Pancreas (tissue), 10 donors: ENCODE measurements at regions of chr7 and their contacts with region 1.

Region 1: DNA sequence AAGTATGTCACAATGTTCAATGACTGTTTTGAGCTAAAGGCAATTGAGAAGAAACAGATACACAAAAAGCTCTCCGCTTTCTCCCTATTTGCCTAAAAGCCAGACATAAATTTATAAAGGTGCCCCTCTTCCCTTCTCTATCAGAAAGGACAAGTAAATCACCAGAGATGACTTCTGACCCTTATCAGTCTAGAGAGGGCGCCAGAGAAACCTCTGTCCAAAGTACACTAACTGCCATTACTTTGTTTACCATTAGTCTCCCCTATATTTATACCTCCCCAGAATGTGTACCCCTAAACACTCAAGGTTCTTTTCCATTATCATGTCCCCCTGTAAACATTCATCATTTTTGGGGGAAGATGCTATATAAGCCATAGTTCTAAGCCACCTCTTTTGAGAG is 49.3 kb downstream of the TPK1 start:
- DNase-seq: no peak
- ATAC-seq: no peak
- H3K4me3 ChIP-seq: no peak overlapping the region
- H3K27ac ChIP-seq: no peak overlapping the region
- H3K4me1 ChIP-seq: no peaks in the 10 kb centered on the region
- H3K27me3 ChIP-seq: no peaks in the 10 kb centered on the region
- CTCF ChIP-seq: no peak

Region 2: GRCh38 chr7:144656965-144657517 is 129.5 kb before region 1 on chr7:
- intact Hi-C with region 1: no loop called
- DNase-seq: no peak
- ATAC-seq: peak in 1 of 4 donors; percentile 44
- H3K4me3 ChIP-seq: no peak overlapping the region
- H3K27ac ChIP-seq: no peak overlapping the region
- H3K4me1 ChIP-seq: no peaks in the 10 kb centered on the region
- H3K27me3 ChIP-seq: no peaks in the 10 kb centered on the region
- CTCF ChIP-seq: no peak

Region 3: GRCh38 chr7:144885478-144885877 is 99.0 kb after region 1 on chr7:
- intact Hi-C with region 1: no loop called
- DNase-seq: no peak
- ATAC-seq: no peak
- H3K4me3 ChIP-seq: no peak overlapping the region
- H3K27ac ChIP-seq: no peak overlapping the region
- H3K4me1 ChIP-seq: no peaks in the 10 kb centered on the region
- H3K27me3 ChIP-seq: no peaks in the 10 kb centered on the region
- CTCF ChIP-seq: no peak

Region 4: DNA sequence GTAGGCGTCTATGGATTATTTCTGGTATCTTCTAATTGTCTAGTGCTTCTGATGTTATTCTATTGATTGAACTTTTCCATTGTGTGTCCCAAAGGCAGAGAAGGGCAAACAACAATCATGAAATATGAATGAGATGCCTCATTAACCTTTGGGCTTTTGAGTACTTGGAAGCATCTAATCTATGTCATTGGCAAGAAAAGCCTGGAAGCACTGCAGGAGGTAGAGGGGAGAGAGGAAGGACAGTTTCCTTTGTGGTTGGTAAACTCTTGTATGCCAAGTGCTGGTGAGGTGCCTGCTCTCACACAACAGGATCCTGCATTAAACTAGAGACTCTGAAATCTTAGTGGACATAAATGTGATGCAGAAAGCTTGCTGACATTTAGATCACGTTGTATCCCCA is 204.5 kb after region 1 on chr7:
- intact Hi-C with region 1: loop called in 1 of 3 experiments (anchors 5 kb)
- DNase-seq: no peak
- ATAC-seq: no peak
- H3K4me3 ChIP-seq: no peak overlapping the region
- H3K27ac ChIP-seq: no peak overlapping the region
- H3K4me1 ChIP-seq: no peaks in the 10 kb centered on the region
- H3K27me3 ChIP-seq: no peaks in the 10 kb centered on the region
- CTCF ChIP-seq: no peak